CD4-positive, alpha-beta T cell (primary cell): ENCODE measurements at regions of chr6 and their contacts with region 1.

Region 1: GRCh38 chr6:159033160-159034049 is 11.4 kb downstream of the TAGAP start:
- DNase-seq: no peak
- ATAC-seq: no peak
- H3K4me3 ChIP-seq: no peak overlapping the region
- H3K4me3 Mint-ChIP-seq: no peak overlapping the region
- H3K27ac ChIP-seq: peak overlapping the region; percentile 21 to 28
- H3K27ac Mint-ChIP-seq: peak overlapping the region; percentile 45
- H3K4me1 ChIP-seq: peaks cover 28% of the 10 kb centered on the region
- H3K4me1 Mint-ChIP-seq: peaks cover 40% of the 10 kb centered on the region
- H3K27me3 ChIP-seq: no peaks in the 10 kb centered on the region
- H3K27me3 Mint-ChIP-seq: no peaks in the 10 kb centered on the region
- CTCF ChIP-seq: no peak

Region 2: DNA sequence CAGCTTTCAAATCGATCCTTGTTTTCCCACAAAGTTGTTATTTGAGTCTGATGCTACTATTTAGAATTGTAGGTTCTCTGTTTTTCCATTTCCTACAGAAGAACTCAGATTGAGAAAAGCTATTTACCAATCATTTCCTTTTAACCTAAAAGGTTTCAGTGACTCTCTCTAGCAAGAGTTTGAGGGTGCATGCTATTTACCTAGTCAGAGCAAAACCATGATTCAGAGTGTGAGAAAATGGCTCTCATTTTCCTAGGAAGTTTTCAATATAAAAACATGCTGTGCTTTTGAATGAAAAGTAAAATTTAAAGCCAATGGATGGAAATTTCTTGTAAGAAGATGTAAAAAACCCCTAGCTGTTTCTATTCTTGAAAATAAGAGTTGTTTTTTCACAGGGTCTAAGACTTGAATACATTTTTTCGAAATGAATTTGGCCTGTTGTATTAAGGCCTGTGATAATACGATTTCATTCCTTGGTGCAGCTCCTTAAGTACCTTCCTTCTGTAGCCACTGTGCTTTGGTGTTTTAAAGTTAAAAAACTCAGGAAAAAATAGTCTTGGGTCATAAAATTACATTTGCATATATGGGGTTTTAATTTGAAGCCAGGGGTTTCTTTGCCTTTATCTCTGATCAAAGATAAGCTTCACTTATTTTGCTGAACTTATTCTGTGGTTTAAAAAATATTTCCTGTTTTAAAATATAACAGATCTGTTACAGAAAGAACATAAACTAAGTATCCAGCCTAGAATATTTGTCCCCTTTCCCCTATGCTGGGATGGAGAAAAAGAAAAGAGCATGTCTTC is 15.4 kb before region 1 on chr6:
- CTCF ChIA-PET with region 1: interaction called, 5 read pairs
- POLR2A ChIA-PET with region 1: interaction called, 21 read pairs
- intact Hi-C with region 1: no loop called
- DNase-seq: peak in 1 of 14 experiments; percentile 34
- ATAC-seq: no peak
- H3K4me3 ChIP-seq: no peak overlapping the region
- H3K4me3 Mint-ChIP-seq: peak overlapping the region; percentile 46
- H3K27ac ChIP-seq: peak overlapping the region; percentile 9 to 57
- H3K27ac Mint-ChIP-seq: peak overlapping the region; percentile 45
- H3K4me1 ChIP-seq: peaks cover 44% of the 10 kb centered on the region
- H3K4me1 Mint-ChIP-seq: peaks cover 57% of the 10 kb centered on the region
- H3K27me3 ChIP-seq: no peaks in the 10 kb centered on the region
- H3K27me3 Mint-ChIP-seq: no peaks in the 10 kb centered on the region
- CTCF ChIP-seq: no peak